ENCODE measurements at regions of chrX and their contacts with region 1.

Region 1: DNA sequence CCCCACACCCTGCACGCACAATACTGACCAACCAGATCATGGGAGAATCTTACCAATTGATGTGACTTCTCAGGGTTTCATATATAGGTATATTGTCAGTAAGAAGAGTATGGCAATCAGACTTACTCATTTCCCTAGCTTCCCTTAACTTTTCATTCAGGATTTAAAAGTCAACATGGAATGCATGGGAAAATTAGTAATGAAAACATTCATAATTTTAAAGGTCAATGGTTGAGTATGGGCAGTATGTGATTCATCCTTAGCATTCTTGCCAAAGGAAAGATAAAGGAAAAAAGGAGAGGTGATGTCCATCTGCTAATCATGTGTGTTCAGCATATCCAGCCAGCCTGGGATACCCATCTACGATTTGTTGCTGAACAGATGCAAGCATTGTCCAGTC is 4.0 kb downstream of the DIPK2B start:
- DNase-seq: no peak
- H3K4me3 ChIP-seq: no peak overlapping the region
- H3K27ac ChIP-seq: no peak overlapping the region
- H3K4me1 ChIP-seq: no peaks in the 10 kb centered on the region
- H3K27me3 ChIP-seq: no peaks in the 10 kb centered on the region
- CTCF ChIP-seq: no peak
- EP300 ChIP-seq: no peak
- POLR2A ChIP-seq: no peak

Region 2: DNA sequence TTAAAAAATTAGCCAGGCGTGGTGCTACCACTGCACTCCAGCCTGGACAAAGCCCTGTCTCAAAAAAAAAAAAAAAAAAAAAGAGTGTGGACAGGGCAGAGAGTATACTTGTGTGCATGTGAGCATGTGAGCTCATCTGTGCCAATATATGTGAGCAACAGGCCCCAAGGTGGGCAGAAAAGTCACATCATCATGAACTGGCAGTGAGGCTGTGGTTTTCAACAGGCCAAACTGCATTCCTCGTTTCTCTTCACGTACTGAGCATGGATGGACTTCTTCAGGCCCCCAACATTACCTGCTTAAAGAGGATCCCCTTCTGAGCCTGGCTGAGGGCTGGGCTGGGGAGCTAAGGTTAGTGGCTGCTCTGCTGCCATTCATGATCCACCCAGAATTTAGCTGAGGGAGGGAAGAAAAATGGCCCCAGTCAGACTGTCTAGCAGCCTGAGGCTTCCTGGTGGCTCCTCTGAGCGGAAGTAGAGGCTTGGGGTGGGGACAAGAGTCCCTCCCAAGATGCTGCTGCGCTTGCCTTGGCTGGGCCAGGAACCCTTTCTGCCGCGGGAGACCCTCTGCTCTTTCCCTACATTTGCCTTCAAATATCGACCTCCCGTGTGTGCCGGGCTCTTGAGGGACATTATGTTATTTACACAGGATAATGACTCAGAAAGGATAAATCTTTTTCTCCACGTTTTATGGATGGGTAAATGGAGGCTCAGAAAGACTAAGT is 51.0 kb before region 1 on chrX:
- intact Hi-C with region 1: loop called in 1 of 4 experiments (anchors 5 kb)
- DNase-seq: no peak
- H3K4me3 ChIP-seq: no peak overlapping the region
- H3K27ac ChIP-seq: no peak overlapping the region
- H3K4me1 ChIP-seq: no peaks in the 10 kb centered on the region
- H3K27me3 ChIP-seq: no peaks in the 10 kb centered on the region
- CTCF ChIP-seq: no peak
- EP300 ChIP-seq: no peak
- POLR2A ChIP-seq: no peak

Measured in ovary (tissue), 10 donors.